SK-N-SH (cell line): ENCODE measurements at regions of chr1 and their contacts with region 1.

Region 1: GRCh38 chr1:226062558-226063223 is at the start of gene H3-3A:
- DNase-seq: peak; percentile 96
- H3K4me3 ChIP-seq: peak within 1 kb of the TSS; percentile 85 to 94
- H3K27ac ChIP-seq: peak within 1 kb of the TSS; percentile 99
- H3K4me1 ChIP-seq: peaks cover 23 to 33% of the 10 kb centered on the region in 2 experiments; a peak in 3 of 4 replicates
- H3K27me3 ChIP-seq: no peaks in the 10 kb centered on the region
- CTCF ChIP-seq: no peak
- EP300 ChIP-seq: peak in 1 of 2 experiments; percentile 26; a peak in 1 of 4 replicates
- RAD21 ChIP-seq: no peak
- polyA plus RNA-seq, gene H3-3A: 315 and 370 TPM in 2 replicates

Region 2: DNA sequence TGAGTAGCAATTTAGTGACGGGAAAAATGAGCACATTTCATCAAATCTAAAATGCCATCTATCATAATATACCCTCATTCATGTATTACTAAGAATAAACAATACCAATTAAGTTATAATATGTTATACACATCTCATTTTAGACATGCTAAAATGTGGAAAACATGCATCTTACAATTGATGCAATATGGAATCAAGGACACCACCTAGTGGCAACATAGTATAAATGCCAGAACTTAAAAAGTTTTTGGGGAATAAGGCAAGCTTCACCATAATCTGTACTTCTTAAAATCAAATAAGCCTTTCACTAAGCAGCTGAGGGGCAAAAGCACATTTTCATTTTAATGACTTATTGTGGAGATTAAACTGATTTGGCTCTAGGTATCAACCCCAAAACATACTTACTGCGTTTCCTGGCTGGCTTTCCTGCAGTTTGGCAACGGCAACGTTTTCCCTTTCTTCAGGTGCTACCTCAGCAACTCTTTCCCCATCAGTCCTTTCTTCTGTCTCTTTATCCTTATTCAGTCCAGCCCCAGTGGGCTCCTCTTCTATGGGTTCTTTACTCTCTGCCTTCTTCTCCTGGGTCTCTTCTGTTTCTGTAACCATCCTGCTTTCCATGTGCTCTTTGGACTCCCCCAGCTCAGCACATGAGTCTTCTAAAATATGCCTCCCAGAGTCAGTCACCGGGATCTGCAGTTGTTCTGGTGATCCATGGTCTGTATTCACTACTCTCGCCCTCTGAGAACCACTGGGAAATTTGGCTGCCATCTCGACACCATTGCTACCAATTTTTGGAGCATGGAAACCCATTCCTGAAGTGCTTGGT is 75.0 kb before region 1 on chr1:
- CTCF ChIA-PET with region 1: interaction called, 11 read pairs
- POLR2A ChIA-PET with region 1: interaction called, 4 read pairs
- DNase-seq: peak; percentile 45
- H3K4me3 ChIP-seq: no peak overlapping the region
- H3K27ac ChIP-seq: no peak overlapping the region
- H3K4me1 ChIP-seq: no peaks in the 10 kb centered on the region
- H3K27me3 ChIP-seq: no peaks in the 10 kb centered on the region
- CTCF ChIP-seq: peak; percentile 87
- EP300 ChIP-seq: no peak
- RAD21 ChIP-seq: peak; percentile 67

Region 3: DNA sequence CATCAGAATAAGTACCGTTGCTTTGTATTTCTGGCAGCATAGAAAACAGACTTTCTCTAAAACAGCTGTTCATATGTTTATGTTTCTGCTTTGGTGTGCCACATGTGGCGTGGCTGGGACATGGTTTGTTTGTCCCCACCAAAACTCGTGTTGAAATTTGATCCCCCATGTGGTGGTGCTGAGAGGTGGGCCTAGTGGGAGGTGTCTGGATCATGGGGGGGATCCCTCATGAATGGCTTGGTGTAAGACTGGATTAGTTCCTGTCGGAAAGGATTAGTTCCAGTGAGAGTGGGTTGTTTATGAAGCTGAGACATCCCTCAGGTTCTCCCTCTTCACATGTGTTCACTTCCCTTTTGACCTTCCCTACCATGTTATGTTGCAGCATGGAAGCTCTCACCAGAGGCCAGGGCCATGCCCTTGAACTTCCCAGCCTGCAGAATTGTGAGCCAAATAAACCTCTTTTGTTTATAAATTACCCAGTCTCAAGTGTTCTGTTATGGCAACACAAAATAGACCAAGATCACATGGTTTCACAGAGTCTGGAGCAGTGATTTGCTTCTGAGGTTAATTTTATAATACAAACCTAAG is 18.1 kb before region 1 on chr1:
- CTCF ChIA-PET with region 1: interaction called, 10 read pairs
- POLR2A ChIA-PET with region 1: interaction called, 3 read pairs
- DNase-seq: no peak
- H3K4me3 ChIP-seq: no peak overlapping the region
- H3K27ac ChIP-seq: no peak overlapping the region
- H3K4me1 ChIP-seq: no peaks in the 10 kb centered on the region
- H3K27me3 ChIP-seq: no peaks in the 10 kb centered on the region
- CTCF ChIP-seq: no peak
- EP300 ChIP-seq: no peak
- RAD21 ChIP-seq: no peak

Region 4: GRCh38 chr1:226100436-226101391 is 38.0 kb after region 1 on chr1:
- CTCF ChIA-PET with region 1: interaction called, 17 read pairs
- POLR2A ChIA-PET with region 1: interaction called, 3 read pairs
- DNase-seq: peak; percentile 78
- H3K4me3 ChIP-seq: peak overlapping the region; percentile 45 to 53
- H3K27ac ChIP-seq: no peak overlapping the region
- H3K4me1 ChIP-seq: peaks cover 0 to 5% of the 10 kb centered on the region in 2 experiments; a peak in 2 of 4 replicates
- H3K27me3 ChIP-seq: no peaks in the 10 kb centered on the region
- CTCF ChIP-seq: no peak
- EP300 ChIP-seq: no peak
- RAD21 ChIP-seq: no peak

Region 5: GRCh38 chr1:226332947-226333346 is 270.3 kb after region 1 on chr1:
- CTCF ChIA-PET with region 1: interaction called, 10 read pairs
- POLR2A ChIA-PET with region 1: no interaction called
- DNase-seq: peak; percentile 35
- H3K4me3 ChIP-seq: peak overlapping the region in 1 of 2 experiments; percentile 29; a peak in 2 of 4 replicates
- H3K27ac ChIP-seq: peak overlapping the region in 1 of 2 experiments; percentile 31; a peak in 1 of 4 replicates
- H3K4me1 ChIP-seq: peaks cover 0 to 2% of the 10 kb centered on the region in 2 experiments; a peak in 2 of 4 replicates
- H3K27me3 ChIP-seq: no peaks in the 10 kb centered on the region
- CTCF ChIP-seq: no peak
- EP300 ChIP-seq: 0 out of 4 replicates have a peak, but pooled peaks of 1 of the 2 experiments have one; percentile 8
- RAD21 ChIP-seq: no peak

Region 6: DNA sequence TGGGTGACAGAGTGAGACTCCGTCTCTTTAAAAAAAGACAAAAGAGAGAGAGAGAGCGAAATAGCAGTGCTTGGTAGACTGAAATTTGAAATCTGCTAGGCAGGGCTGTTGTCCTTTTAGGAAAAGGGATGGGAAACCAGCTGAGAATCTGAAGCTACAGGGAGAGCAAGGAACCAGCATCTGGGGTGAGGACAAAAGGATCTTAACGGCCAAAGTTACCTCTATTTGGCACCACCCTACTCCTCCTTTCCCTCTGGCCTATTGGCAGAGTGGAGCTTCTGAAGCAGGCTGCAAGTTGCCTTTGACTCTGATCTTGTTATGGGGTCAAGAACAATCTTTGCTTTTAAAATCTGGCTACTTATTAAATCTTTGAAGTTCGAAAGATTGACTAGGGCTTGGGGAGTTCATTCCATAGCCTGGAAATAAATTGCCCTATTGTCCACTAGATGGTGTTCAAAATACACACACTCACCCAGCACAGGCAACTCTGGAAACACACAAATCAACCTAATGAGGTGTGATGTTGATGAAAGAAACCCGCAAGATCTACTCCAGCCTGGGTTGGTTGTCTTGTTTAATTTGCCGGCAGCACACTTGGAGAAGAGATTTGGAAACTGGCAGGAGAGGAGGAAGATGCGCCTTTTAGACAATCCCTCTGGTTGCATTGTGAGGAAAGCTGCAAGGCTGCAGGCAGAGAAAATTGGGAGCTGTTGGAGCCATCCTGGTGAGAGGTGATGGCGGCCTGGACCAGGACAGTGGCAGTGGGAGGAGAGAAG is 361.7 kb after region 1 on chr1:
- CTCF ChIA-PET with region 1: no interaction called
- POLR2A ChIA-PET with region 1: no interaction called
- DNase-seq: peak; percentile 64
- H3K4me3 ChIP-seq: no peak overlapping the region; a peak in 1 of 4 replicates
- H3K27ac ChIP-seq: no peak overlapping the region
- H3K4me1 ChIP-seq: peaks cover 0 to 6% of the 10 kb centered on the region in 2 experiments; a peak in 2 of 4 replicates
- H3K27me3 ChIP-seq: no peaks in the 10 kb centered on the region
- CTCF ChIP-seq: peak; percentile 60
- EP300 ChIP-seq: no peak
- RAD21 ChIP-seq: peak; percentile 80